ENCODE measurements at regions of chr6 and their contacts with region 1.

Region 1: GRCh38 chr6:133916650-133917151 is 27.8 kb downstream of the TCF21 start:
- DNase-seq: peak; percentile 89
- H3K4me3 Mint-ChIP-seq: no peak overlapping the region
- H3K27ac Mint-ChIP-seq: no peak overlapping the region
- H3K4me1 Mint-ChIP-seq: peaks cover 4% of the 10 kb centered on the region
- H3K27me3 Mint-ChIP-seq: peaks cover 9% of the 10 kb centered on the region

Region 2: GRCh38 chr6:132530293-132530974 is 1386.3 kb before region 1 on chr6:
- CTCF ChIA-PET with region 1: no interaction called
- intact Hi-C with region 1: loop called (anchors 5 kb)
- DNase-seq: peak; percentile 81
- H3K4me3 Mint-ChIP-seq: no peak overlapping the region
- H3K27ac Mint-ChIP-seq: no peak overlapping the region
- H3K4me1 Mint-ChIP-seq: peaks cover 2% of the 10 kb centered on the region
- H3K27me3 Mint-ChIP-seq: peaks cover 7% of the 10 kb centered on the region

Region 3: DNA sequence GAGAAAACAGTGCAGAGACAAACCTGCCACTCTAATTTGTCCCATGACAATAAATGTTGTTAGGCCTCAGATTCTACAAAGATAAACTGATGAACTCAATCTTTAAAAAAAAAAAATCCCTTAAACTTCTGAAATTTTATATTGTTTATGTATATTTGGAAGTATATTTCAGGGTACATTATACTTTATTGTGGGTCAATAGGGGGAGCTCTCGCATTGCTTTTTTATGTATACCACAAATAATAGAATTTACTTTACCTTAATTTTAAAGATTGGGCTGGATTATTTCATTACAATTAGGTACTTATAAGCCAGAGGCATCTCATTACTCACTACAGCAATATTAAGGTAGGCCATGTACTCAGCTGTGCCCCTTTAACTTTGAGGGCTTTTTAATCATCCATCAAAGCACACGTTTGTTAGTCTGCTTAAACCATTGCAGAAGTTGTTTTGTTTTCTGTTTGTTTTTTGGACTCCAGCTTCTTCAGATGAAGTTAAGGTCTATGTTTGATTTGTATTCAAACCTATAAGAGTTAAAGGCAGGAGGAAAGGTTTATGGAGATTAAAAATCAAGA is 731.8 kb before region 1 on chr6:
- CTCF ChIA-PET with region 1: interaction called, 4 read pairs
- intact Hi-C with region 1: loop called (anchors 1 kb)
- DNase-seq: no peak
- H3K4me3 Mint-ChIP-seq: no peak overlapping the region
- H3K27ac Mint-ChIP-seq: no peak overlapping the region
- H3K4me1 Mint-ChIP-seq: no peaks in the 10 kb centered on the region
- H3K27me3 Mint-ChIP-seq: peaks cover 11% of the 10 kb centered on the region

Region 4: DNA sequence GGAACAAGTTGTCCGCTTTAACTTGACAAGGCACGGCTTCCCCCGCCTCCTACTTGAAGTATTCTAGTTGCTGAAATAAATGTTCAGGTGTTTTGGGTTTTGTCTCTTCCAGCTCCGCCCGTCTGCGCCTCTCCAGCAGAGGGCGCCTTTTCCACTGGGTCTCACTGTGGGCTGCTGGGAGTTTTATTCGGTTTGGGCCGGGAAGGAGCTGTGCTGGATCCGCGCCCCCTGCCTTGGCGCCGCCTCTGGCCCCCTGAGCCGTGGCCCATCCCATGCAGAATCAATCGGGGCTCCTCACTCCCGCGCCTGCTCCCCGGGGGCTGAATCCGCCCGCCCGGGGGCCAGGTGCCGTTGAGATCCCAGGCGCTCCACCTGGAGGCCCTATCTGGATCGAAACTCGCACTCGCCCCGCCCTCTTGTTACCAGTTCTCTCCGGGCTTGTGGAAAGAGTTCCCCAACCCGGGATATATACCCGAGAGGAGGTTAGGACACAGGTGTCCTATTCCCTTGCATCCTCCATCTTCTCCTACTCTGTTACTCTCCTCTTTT is 78.8 kb before region 1 on chr6:
- CTCF ChIA-PET with region 1: interaction called, 82 read pairs
- intact Hi-C with region 1: loop called (anchors 1 kb)
- DNase-seq: peak; percentile 75
- H3K4me3 Mint-ChIP-seq: peak overlapping the region; percentile 55
- H3K27ac Mint-ChIP-seq: no peak overlapping the region
- H3K4me1 Mint-ChIP-seq: peaks cover 5% of the 10 kb centered on the region
- H3K27me3 Mint-ChIP-seq: peaks cover 20% of the 10 kb centered on the region

Region 5: GRCh38 chr6:133906050-133906449 is 10.7 kb before region 1 on chr6:
- CTCF ChIA-PET with region 1: interaction called, 11 read pairs
- intact Hi-C with region 1: no loop called
- DNase-seq: no peak
- H3K4me3 Mint-ChIP-seq: no peak overlapping the region
- H3K27ac Mint-ChIP-seq: no peak overlapping the region
- H3K4me1 Mint-ChIP-seq: no peaks in the 10 kb centered on the region
- H3K27me3 Mint-ChIP-seq: peaks cover 36% of the 10 kb centered on the region

Region 6: GRCh38 chr6:134347916-134348805 is 431.5 kb after region 1 on chr6:
- CTCF ChIA-PET with region 1: no interaction called
- intact Hi-C with region 1: no loop called
- DNase-seq: no peak
- H3K4me3 Mint-ChIP-seq: no peak overlapping the region
- H3K27ac Mint-ChIP-seq: no peak overlapping the region
- H3K4me1 Mint-ChIP-seq: peaks cover 30% of the 10 kb centered on the region
- H3K27me3 Mint-ChIP-seq: no peaks in the 10 kb centered on the region

Region 7: DNA sequence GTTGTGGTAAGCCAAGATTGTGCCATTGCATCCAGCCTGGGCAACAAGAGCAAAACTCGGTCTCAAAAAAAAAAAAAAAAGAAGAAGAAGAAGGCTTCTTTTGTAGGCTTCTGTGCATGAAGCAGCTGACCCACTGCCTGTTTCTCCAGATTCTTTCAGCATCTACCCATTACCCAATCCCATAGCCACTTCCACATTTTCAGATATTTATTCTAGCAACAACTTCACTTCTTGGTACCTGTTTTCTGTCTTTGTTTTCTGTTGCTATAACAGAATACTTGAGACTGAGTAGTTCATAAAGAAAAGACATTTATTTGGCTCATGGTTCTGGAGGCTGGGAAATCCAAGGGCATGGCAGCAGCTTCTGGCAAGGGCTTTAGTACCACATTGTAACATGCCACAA is 496.5 kb after region 1 on chr6:
- CTCF ChIA-PET with region 1: no interaction called
- intact Hi-C with region 1: no loop called
- DNase-seq: no peak
- H3K4me3 Mint-ChIP-seq: no peak overlapping the region
- H3K27ac Mint-ChIP-seq: no peak overlapping the region
- H3K4me1 Mint-ChIP-seq: peaks cover 14% of the 10 kb centered on the region
- H3K27me3 Mint-ChIP-seq: no peaks in the 10 kb centered on the region